ENCODE measurements at regions of chr10 and their contacts with region 1.

Region 1: GRCh38 chr10:67520924-67521520 is 175.0 kb downstream of the CTNNA3 start:
- DNase-seq: peak; percentile 72
- ATAC-seq: peak; percentile 98
- H3K4me3 ChIP-seq: no peak overlapping the region
- H3K27ac ChIP-seq: no peak overlapping the region
- H3K4me1 ChIP-seq: no peaks in the 10 kb centered on the region
- H3K27me3 ChIP-seq: no peaks in the 10 kb centered on the region
- CTCF ChIP-seq: peak; percentile 84
- POLR2A ChIP-seq: no peak
- RAD21 ChIP-seq: peak; percentile 87

Region 2: GRCh38 chr10:66180581-66181318 is 1340.3 kb before region 1 on chr10:
- CTCF ChIA-PET with region 1: no interaction called
- POLR2A ChIA-PET with region 1: no interaction called
- dilution Hi-C with region 1: no loop called
- in situ Hi-C with region 1: no loop called
- intact Hi-C with region 1: loop called (anchors 2 kb)
- DNase-seq: peak; percentile 52
- ATAC-seq: peak; percentile 77
- H3K4me3 ChIP-seq: no peak overlapping the region
- H3K27ac ChIP-seq: no peak overlapping the region
- H3K4me1 ChIP-seq: no peaks in the 10 kb centered on the region
- H3K27me3 ChIP-seq: no peaks in the 10 kb centered on the region
- CTCF ChIP-seq: peak; percentile 64
- POLR2A ChIP-seq: no peak
- RAD21 ChIP-seq: peak; percentile 49

Region 3: DNA sequence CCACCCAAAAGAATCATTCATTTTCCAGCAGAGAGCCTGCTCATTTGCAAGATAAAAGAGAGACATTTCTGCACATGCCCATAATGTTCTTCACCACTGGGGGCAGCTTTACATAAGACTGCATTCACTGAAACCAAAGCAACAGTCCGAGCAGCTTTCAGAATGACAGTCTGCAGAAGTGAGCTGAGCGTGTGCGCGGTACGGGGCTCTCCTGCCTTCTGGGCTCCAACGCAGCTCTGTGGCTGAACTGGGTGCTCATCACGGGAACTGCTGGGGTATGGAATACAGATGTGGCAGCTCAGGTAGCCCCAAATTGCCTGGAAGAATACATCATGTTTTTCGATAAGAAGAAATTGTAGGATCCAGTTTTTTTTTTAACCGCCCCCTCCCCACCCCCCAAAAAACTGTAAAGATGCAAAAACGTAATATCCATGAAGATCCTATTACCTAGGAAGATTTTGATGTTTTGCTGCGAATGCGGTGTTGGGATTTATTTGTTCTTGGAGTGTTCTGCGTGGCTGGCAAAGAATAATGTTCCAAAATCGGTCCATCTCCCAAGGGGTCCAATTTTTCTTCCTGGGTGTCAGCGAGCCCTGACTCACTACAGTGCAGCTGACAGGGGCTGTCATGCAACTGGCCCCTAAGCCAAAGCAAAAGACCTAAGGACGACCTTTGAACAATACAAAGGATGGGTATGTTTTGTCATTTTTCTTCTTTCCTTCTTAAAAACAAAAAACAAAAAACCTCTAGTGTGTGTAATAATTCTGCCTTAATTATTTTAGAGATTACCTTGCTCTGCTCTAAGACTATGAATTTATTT is 594.9 kb before region 1 on chr10 and contains the start of gene LRRTM3:
- CTCF ChIA-PET with region 1: interaction called, 3 read pairs
- POLR2A ChIA-PET with region 1: no interaction called
- dilution Hi-C with region 1: no loop called
- in situ Hi-C with region 1: loop called (anchors 25 kb)
- intact Hi-C with region 1: loop called (anchors 2 kb)
- DNase-seq: peak; percentile 73
- ATAC-seq: peak; percentile 98
- H3K4me3 ChIP-seq: no peak within 1 kb of the TSS
- H3K27ac ChIP-seq: no peak within 1 kb of the TSS
- H3K4me1 ChIP-seq: no peaks in the 10 kb centered on the region
- H3K27me3 ChIP-seq: peaks cover 14% of the 10 kb centered on the region
- CTCF ChIP-seq: peak; percentile 65
- POLR2A ChIP-seq: no peak
- RAD21 ChIP-seq: peak; percentile 53
- total RNA-seq, gene LRRTM3: under 0.01 TPM in 1 of 2 replicates, not detected in the other

Region 4: GRCh38 chr10:67306588-67307205 is 214.3 kb before region 1 on chr10:
- CTCF ChIA-PET with region 1: no interaction called
- POLR2A ChIA-PET with region 1: no interaction called
- dilution Hi-C with region 1: no loop called
- in situ Hi-C with region 1: no loop called
- intact Hi-C with region 1: loop called (anchors 5 kb)
- DNase-seq: peak; percentile 4
- ATAC-seq: no peak
- H3K4me3 ChIP-seq: no peak overlapping the region
- H3K27ac ChIP-seq: no peak overlapping the region
- H3K4me1 ChIP-seq: no peaks in the 10 kb centered on the region
- H3K27me3 ChIP-seq: no peaks in the 10 kb centered on the region
- CTCF ChIP-seq: peak; percentile 49
- POLR2A ChIP-seq: no peak
- RAD21 ChIP-seq: peak; percentile 19; the same call in 1 of the 2 replicates

Region 5: GRCh38 chr10:67471022-67471421 is 50.0 kb before region 1 on chr10:
- CTCF ChIA-PET with region 1: no interaction called
- POLR2A ChIA-PET with region 1: no interaction called
- dilution Hi-C with region 1: no loop called
- in situ Hi-C with region 1: no loop called
- intact Hi-C with region 1: no loop called
- DNase-seq: no peak
- ATAC-seq: no peak
- H3K4me3 ChIP-seq: no peak overlapping the region
- H3K27ac ChIP-seq: no peak overlapping the region
- H3K4me1 ChIP-seq: no peaks in the 10 kb centered on the region
- H3K27me3 ChIP-seq: no peaks in the 10 kb centered on the region
- CTCF ChIP-seq: no peak
- POLR2A ChIP-seq: no peak
- RAD21 ChIP-seq: no peak

Region 6: GRCh38 chr10:67779465-67780203 is 258.6 kb after region 1 on chr10:
- CTCF ChIA-PET with region 1: interaction called, 3 read pairs
- POLR2A ChIA-PET with region 1: no interaction called
- dilution Hi-C with region 1: no loop called
- in situ Hi-C with region 1: loop called (anchors 10 kb)
- intact Hi-C with region 1: loop called (anchors 1 kb)
- DNase-seq: peak; percentile 84
- ATAC-seq: peak; percentile 88
- H3K4me3 ChIP-seq: no peak overlapping the region
- H3K27ac ChIP-seq: no peak overlapping the region
- H3K4me1 ChIP-seq: no peaks in the 10 kb centered on the region
- H3K27me3 ChIP-seq: peaks cover 3% of the 10 kb centered on the region
- CTCF ChIP-seq: peak; percentile 90
- POLR2A ChIP-seq: no peak
- RAD21 ChIP-seq: peak; percentile 90